ENCODE measurements at regions of chr4 and their contacts with region 1.

Region 1: DNA sequence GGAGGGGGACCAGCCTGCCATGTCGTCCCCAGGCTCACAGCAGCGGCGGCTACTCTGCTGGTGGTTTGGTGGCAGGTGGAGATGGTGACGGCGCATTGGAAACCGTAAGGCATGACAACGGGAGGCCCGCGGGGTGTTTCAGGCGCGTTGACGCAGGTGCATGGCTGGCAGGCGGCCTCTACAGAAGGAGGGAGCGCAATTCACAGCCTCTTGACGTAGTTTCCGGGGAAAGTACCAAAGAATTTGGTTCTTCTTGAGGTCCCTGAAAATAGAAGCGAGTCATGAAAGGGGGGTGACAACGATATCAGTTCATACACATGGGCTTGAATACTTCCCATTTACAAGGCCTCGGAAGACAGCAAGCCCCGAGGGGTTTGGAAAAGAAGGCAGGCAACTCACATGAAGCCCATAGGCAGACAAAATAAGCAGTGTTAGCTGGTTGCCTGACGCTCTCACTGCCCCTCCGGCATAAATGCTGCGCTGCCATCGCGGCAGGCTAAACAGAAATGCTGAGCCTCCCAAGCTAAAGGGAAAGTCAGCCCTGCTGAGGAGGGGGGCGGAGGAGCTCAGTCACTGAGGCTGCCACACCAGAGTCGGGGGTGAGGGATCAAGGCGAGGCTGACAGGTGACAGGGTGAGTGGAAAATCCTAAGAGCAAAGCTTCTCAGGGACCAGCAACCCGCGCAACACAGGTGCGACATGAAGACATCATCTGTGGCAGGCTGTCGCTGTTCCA is 52.3 kb upstream of the PDLIM3 start:
- DNase-seq: peak; percentile 91
- ATAC-seq: peak; percentile 92
- H3K4me3 ChIP-seq: peak overlapping the region in 4 of 5 experiments; percentile 18 to 59 (median 40)
- H3K4me3 Mint-ChIP-seq: peak overlapping the region; percentile 88
- H3K27ac ChIP-seq: peak overlapping the region in 1 of 2 donors; percentile 58
- H3K27ac Mint-ChIP-seq: peak overlapping the region; percentile 93
- H3K4me1 ChIP-seq: peaks cover 12 to 13% of the 10 kb centered on the region in 2 donors
- H3K4me1 Mint-ChIP-seq: peaks cover 27% of the 10 kb centered on the region
- H3K27me3 ChIP-seq: peaks cover 0 to 13% (median 12%) of the 10 kb centered on the region in 4 experiments
- H3K27me3 Mint-ChIP-seq: peaks cover 49% of the 10 kb centered on the region
- CTCF ChIP-seq: no peak

Region 2: GRCh38 chr4:185203486-185204237 is 383.9 kb before region 1 on chr4 and contains the start of gene CFAP97:
- CTCF ChIA-PET with region 1: no interaction called
- POLR2A ChIA-PET with region 1: no interaction called
- intact Hi-C with region 1: loop called (anchors 5 kb)
- DNase-seq: peak; percentile 90
- ATAC-seq: peak; percentile 81
- H3K4me3 ChIP-seq: peak within 1 kb of the TSS; percentile 58 to 73 (median 71)
- H3K4me3 Mint-ChIP-seq: peak within 1 kb of the TSS; percentile 97
- H3K27ac ChIP-seq: peak within 1 kb of the TSS; percentile 76 to 90
- H3K27ac Mint-ChIP-seq: peak within 1 kb of the TSS; percentile 98
- H3K4me1 ChIP-seq: peaks cover 31 to 45% of the 10 kb centered on the region in 2 donors
- H3K4me1 Mint-ChIP-seq: peaks cover 45% of the 10 kb centered on the region
- H3K27me3 ChIP-seq: no peaks in the 10 kb centered on the region
- H3K27me3 Mint-ChIP-seq: no peaks in the 10 kb centered on the region
- CTCF ChIP-seq: peak; percentile 10
- total RNA-seq, gene CFAP97: 32.0 and 32.4 TPM in 2 replicates

Region 3: GRCh38 chr4:185874516-185875230 is 287.1 kb after region 1 on chr4:
- CTCF ChIA-PET with region 1: no interaction called
- POLR2A ChIA-PET with region 1: no interaction called
- intact Hi-C with region 1: no loop called
- DNase-seq: no peak
- ATAC-seq: no peak
- H3K4me3 ChIP-seq: no peak overlapping the region
- H3K4me3 Mint-ChIP-seq: no peak overlapping the region
- H3K27ac ChIP-seq: no peak overlapping the region
- H3K27ac Mint-ChIP-seq: no peak overlapping the region
- H3K4me1 ChIP-seq: no peaks in the 10 kb centered on the region
- H3K4me1 Mint-ChIP-seq: no peaks in the 10 kb centered on the region
- H3K27me3 ChIP-seq: peaks cover 0 to 3% (median 0%) of the 10 kb centered on the region in 4 experiments
- H3K27me3 Mint-ChIP-seq: no peaks in the 10 kb centered on the region
- CTCF ChIP-seq: no peak